Right cardiac atrium (tissue), 5 donors: ENCODE measurements at regions of chr12 and their contacts with region 1.

Region 1: DNA sequence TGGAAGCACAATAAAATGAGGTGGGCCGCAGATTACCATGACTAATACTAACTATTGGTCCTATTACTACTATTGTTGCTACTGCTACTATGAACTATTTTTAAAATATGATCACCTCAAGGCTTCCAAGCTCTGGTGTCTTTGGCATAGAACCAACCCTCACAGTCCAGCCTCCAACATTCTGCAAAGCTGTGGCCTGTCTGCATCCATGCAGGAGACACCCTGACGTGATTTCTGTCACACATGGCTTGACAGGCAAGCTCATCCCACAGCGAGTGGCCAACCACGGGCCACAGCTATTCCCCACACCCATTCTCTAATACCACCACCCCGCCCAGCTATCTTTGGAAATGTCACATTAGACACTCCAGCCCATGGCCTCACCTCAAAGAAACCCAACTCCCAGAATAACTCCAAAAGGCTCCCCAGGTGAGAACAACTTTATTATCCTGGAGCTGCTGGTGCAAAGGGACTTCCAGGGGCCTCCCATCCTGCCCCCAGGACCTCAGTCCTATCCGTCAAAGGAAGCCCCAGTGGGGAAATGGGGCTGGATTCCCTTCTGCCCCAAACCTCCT is 14.4 kb downstream of the ISCU start:
- DNase-seq: no peak
- ATAC-seq: peak; percentile 69 to 70
- H3K4me3 ChIP-seq: no peak overlapping the region
- H3K27ac ChIP-seq: no peak overlapping the region
- H3K4me1 ChIP-seq: no peaks in the 10 kb centered on the region
- H3K27me3 ChIP-seq: no peaks in the 10 kb centered on the region

Region 2: GRCh38 chr12:108611884-108612415 is 35.2 kb after region 1 on chr12:
- intact Hi-C with region 1: loop called in 2 of 4 experiments (anchors 5 kb)
- DNase-seq: peak in 1 of 3 donors; percentile 47
- ATAC-seq: no peak
- H3K4me3 ChIP-seq: no peak overlapping the region
- H3K27ac ChIP-seq: no peak overlapping the region
- H3K4me1 ChIP-seq: no peaks in the 10 kb centered on the region
- H3K27me3 ChIP-seq: no peaks in the 10 kb centered on the region